Right lobe of liver (tissue), 6 donors: ENCODE measurements at regions of chr18 and their contacts with region 1.

Region 1: DNA sequence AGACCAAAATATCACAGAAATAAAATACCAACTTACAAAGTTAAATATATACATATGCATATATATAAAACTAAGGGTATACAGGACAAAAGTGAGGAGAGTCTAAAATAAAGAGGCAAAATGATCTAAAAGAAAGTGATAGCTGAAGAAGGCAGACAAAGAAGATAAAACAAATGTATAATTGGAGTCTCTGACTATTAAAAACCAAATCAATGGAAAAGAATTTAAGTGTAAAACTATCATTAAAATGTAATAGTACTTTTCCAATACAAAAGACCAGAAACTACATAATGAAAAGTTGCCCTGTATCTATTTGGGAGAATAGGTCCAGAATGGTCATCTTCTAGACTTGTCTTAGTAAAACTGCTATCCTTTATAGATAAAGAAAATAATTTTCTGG is 267.4 kb upstream of the KLHL14 start:
- DNase-seq: no peak
- ATAC-seq: no peak
- H3K4me3 ChIP-seq: no peak overlapping the region
- H3K27ac ChIP-seq: no peak overlapping the region
- H3K4me1 ChIP-seq: no peaks in the 10 kb centered on the region
- H3K27me3 ChIP-seq: no peaks in the 10 kb centered on the region
- CTCF ChIP-seq: no peak
- POLR2A ChIP-seq: no peak

Region 2: DNA sequence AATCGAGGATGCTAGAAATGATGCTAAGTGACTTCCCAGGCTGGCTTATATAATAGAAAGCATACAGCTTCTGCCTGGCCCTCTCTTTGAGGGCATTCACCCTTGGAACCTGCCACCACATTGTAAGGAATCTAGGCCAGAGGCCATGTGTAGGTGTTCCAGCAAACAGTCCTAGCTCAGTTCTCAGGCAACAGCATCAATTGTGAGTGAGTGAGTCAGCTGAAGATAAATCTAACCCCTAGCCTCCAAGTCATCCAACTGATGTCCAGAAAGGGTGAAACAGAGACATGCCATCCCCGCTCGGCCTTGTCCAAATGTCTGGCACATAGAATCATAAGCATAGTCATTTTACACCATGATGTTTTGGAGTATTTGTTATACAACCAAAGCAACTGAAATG is 56.9 kb after region 1 on chr18:
- intact Hi-C with region 1: loop called in 1 of 2 experiments (anchors 10 kb)
- DNase-seq: peak in 1 of 3 donors; percentile 43
- ATAC-seq: peak in 1 of 4 donors; percentile 39
- H3K4me3 ChIP-seq: no peak overlapping the region
- H3K27ac ChIP-seq: no peak overlapping the region
- H3K4me1 ChIP-seq: no peaks in the 10 kb centered on the region
- H3K27me3 ChIP-seq: no peaks in the 10 kb centered on the region
- CTCF ChIP-seq: no peak
- POLR2A ChIP-seq: no peak